Activated B cell treated with CpG ODN at 0.5 μM for 24 hours (primary cell): ENCODE measurements at regions of chr1 and their contacts with region 1.

Region 1: GRCh38 chr1:114757455-114758250 is at the start of gene CSDE1:
- DNase-seq: peak; percentile 92
- ATAC-seq: peak; percentile 90
- H3K4me3 Mint-ChIP-seq: peak within 1 kb of the TSS; percentile 100
- H3K27ac Mint-ChIP-seq: peak within 1 kb of the TSS; percentile 100
- H3K4me1 Mint-ChIP-seq: peaks cover 57% of the 10 kb centered on the region
- H3K27me3 Mint-ChIP-seq: no peaks in the 10 kb centered on the region
- CTCF ChIP-seq: no peak
- total RNA-seq, gene CSDE1: 416 and 424 TPM in 2 replicates

Region 2: DNA sequence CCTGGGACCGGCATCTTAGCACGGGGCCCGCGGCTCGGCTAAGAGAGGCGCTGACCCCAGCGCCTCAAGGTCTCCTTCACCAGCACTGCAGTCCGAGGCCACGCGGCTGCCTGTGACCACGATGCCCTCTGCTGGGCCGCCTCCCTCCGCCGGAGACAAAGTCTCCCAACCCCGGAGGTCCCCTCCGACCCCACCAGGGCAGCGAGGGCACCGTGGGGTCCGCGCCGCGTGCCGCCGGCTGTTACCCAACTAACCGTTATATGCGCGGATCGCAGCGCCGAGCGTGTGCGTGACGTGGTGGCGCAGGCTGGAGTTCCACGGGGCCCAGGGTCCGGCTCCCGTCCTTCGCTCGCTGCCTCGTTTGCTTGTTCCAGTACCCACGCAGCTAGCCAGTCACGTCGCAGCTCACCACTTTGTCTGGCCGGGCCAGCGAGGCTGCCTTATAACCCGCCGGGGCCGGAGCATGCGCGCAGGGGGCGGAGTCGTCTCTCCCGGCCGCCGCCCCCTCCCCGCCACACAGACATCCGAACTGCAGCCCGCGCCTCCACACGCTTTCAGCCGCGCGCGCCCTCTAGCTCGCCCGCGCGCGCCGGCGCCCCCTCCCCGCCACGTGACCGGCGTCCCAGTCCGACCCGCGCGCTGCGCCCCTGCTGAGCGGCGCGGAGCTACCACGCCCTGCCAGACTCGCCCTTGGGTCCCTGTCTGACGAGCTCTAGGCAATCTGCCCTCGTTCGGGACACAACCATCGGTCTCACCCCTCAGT is 1801.7 kb before region 1 on chr1 and contains the start of gene SLC16A1:
- CTCF ChIA-PET with region 1: no interaction called
- POLR2A ChIA-PET with region 1: no interaction called
- intact Hi-C with region 1: loop called (anchors 10 kb)
- DNase-seq: peak; percentile 89
- ATAC-seq: peak; percentile 82
- H3K4me3 Mint-ChIP-seq: peak within 1 kb of the TSS; percentile 98
- H3K27ac Mint-ChIP-seq: peak within 1 kb of the TSS; percentile 98
- H3K4me1 Mint-ChIP-seq: peaks cover 49% of the 10 kb centered on the region
- H3K27me3 Mint-ChIP-seq: no peaks in the 10 kb centered on the region
- CTCF ChIP-seq: no peak
- total RNA-seq, gene SLC16A1: 17.8 and 17.9 TPM in 2 replicates

Region 3: GRCh38 chr1:113904674-113905434 is 852.8 kb before region 1 on chr1 and contains the starts of genes AP4B1 and DCLRE1B:
- CTCF ChIA-PET with region 1: no interaction called
- POLR2A ChIA-PET with region 1: no interaction called
- intact Hi-C with region 1: loop called (anchors 1 kb)
- DNase-seq: peak; percentile 89
- ATAC-seq: peak; percentile 91
- H3K4me3 Mint-ChIP-seq: peak within 1 kb of the TSS; percentile 94
- H3K27ac Mint-ChIP-seq: peak within 1 kb of the TSS; percentile 95
- H3K4me1 Mint-ChIP-seq: peaks cover 51% of the 10 kb centered on the region
- H3K27me3 Mint-ChIP-seq: no peaks in the 10 kb centered on the region
- CTCF ChIP-seq: no peak
- total RNA-seq, gene AP4B1: 48.5 and 69.9 TPM in 2 replicates
- total RNA-seq, gene DCLRE1B: 5.4 and 6.0 TPM in 2 replicates

Region 4: GRCh38 chr1:114511032-114511785 is 246.4 kb before region 1 on chr1 and contains the start of gene TRIM33:
- CTCF ChIA-PET with region 1: no interaction called
- POLR2A ChIA-PET with region 1: interaction called, 9 read pairs
- intact Hi-C with region 1: loop called (anchors 1 kb)
- DNase-seq: peak; percentile 93
- ATAC-seq: peak; percentile 73
- H3K4me3 Mint-ChIP-seq: peak within 1 kb of the TSS; percentile 98
- H3K27ac Mint-ChIP-seq: peak within 1 kb of the TSS; percentile 99
- H3K4me1 Mint-ChIP-seq: peaks cover 48% of the 10 kb centered on the region
- H3K27me3 Mint-ChIP-seq: no peaks in the 10 kb centered on the region
- CTCF ChIP-seq: no peak
- total RNA-seq, gene TRIM33: 38.4 and 41.2 TPM in 2 replicates

Region 5: DNA sequence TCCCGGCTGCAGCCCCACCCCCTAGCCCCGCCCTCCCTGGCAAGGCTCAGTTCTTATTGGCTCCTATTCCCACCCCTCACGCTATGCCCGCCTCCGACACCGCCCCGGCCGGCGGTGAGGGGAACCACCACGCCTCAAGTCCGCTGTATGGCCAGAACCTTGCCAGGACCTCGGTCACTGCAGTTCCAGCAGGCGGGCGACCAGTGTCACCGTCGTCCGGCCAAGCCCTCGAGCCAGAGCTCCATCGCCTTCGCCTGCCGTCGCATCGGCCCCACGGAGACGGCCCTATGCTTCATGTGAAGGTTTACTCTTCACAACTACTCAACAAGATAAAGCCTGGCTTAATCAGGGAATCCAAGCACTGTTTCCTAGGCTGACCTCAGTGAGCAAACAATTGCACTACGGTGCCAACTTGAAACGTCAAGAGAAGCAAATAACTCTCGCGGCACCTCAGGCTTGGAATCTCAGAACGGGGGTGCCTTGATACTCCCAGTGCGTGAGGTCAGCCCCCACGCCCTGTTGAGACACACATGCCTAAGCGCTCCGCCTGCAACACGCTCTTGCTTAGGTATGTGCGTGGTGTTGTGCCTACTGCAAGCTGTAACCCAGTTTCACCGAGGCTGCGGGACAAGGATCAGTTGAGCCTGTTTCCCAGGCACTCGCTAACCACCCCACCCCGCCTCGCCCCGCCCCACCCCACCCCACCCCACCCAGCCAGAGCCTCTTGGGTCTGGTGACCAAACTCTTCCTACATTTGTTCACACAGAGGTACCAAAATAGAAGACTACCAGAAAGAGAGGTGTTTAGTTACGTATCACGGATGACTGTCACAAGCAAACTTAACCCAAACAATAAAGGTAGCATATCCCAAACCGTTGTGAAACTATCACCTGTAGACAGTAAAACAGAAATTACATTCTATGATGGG is 87.3 kb before region 1 on chr1:
- CTCF ChIA-PET with region 1: no interaction called
- POLR2A ChIA-PET with region 1: interaction called, 5 read pairs
- intact Hi-C with region 1: loop called (anchors 1 kb)
- DNase-seq: peak; percentile 80
- ATAC-seq: peak; percentile 99
- H3K4me3 Mint-ChIP-seq: peak overlapping the region; percentile 94
- H3K27ac Mint-ChIP-seq: peak overlapping the region; percentile 67
- H3K4me1 Mint-ChIP-seq: peaks cover 10% of the 10 kb centered on the region
- H3K27me3 Mint-ChIP-seq: peaks cover 30% of the 10 kb centered on the region
- CTCF ChIP-seq: no peak

Region 6: DNA sequence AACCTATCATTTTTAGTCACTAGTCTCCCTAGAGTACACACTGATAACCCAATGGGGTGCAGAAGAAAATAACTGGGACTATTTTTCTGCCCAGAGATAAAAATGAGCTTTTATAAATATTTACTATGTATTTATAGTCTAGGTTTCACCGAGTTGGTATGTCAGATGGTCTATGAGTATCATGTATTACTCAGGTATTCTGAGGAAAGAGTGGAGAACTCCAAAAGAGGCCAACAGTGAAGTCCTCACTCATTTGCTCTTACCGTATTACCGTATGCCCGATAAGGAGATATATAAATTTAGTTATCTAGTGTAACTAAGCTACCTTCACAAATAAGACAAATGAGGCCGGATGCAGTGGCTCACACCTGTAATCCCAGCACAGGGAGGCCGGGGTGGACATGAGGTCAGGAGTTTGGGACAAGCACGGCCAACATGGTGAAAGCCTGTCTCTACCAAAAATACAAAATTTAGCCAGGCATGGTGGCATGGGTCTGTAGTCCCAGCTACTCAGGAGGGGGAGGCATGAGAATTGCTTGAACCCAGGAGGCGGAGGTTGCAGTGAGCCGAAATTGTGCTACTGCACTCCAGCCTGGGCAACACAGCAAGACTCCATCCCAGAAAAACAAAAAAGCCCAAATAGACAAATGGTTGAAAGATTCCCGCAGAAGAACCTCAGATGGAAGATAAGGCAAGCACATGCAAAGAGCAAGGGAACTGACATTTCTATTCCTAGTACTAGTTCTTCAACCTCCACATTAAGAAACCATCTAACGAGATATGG is 15.5 kb before region 1 on chr1:
- CTCF ChIA-PET with region 1: no interaction called
- POLR2A ChIA-PET with region 1: interaction called, 3 read pairs
- intact Hi-C with region 1: loop called (anchors 2 kb)
- DNase-seq: no peak
- ATAC-seq: no peak
- H3K4me3 Mint-ChIP-seq: no peak overlapping the region
- H3K27ac Mint-ChIP-seq: no peak overlapping the region
- H3K4me1 Mint-ChIP-seq: peaks cover 19% of the 10 kb centered on the region
- H3K27me3 Mint-ChIP-seq: no peaks in the 10 kb centered on the region
- CTCF ChIP-seq: no peak

Region 7: DNA sequence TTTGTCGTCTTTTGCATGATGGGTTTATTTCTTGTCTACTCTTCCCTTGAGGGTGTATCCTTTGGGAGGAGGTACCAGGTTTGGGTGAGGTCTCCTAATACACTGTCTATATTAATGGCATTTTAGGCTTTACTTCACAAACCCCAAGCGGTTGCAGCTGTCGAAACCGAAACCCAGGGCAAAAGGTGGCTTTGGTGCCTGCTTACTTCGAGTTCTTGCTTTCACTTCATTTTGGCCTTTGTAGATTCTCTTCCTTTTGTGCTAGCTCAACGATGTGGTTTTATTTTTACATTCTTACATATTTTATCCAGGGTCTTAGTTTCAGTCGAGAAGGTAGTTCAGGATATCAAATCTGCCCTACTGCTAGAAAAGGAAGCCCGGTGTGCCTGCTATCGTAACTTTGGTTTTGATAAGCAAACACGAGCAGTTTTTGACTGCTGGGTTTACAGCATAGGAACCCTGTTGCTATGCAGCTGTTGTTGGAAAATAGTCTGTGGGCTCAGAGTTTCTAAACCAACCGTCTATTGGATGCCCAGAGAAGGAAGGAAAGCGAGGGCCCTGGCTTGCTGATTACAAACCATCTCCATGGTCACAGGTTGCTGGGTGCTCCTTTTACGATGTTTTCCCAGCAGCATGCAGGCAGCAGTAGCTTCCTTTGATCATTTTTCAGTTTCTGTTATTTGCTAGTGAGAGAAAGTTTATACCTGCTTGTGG is 341.5 kb after region 1 on chr1:
- CTCF ChIA-PET with region 1: no interaction called
- POLR2A ChIA-PET with region 1: no interaction called
- intact Hi-C with region 1: loop called (anchors 10 kb)
- DNase-seq: peak; percentile 34
- ATAC-seq: peak; percentile 86
- H3K4me3 Mint-ChIP-seq: peak overlapping the region; percentile 88
- H3K27ac Mint-ChIP-seq: peak overlapping the region; percentile 99
- H3K4me1 Mint-ChIP-seq: peaks cover 29% of the 10 kb centered on the region
- H3K27me3 Mint-ChIP-seq: no peaks in the 10 kb centered on the region
- CTCF ChIP-seq: no peak

Region 8: GRCh38 chr1:115506926-115507589 is 749.4 kb after region 1 on chr1:
- CTCF ChIA-PET with region 1: no interaction called
- POLR2A ChIA-PET with region 1: no interaction called
- intact Hi-C with region 1: no loop called
- DNase-seq: no peak
- ATAC-seq: no peak
- H3K4me3 Mint-ChIP-seq: no peak overlapping the region
- H3K27ac Mint-ChIP-seq: no peak overlapping the region
- H3K4me1 Mint-ChIP-seq: no peaks in the 10 kb centered on the region
- H3K27me3 Mint-ChIP-seq: peaks cover 6% of the 10 kb centered on the region
- CTCF ChIP-seq: no peak